Mammary epithelial cell (primary cell): ENCODE measurements at regions of chr21 and their contacts with region 1.

Region 1: DNA sequence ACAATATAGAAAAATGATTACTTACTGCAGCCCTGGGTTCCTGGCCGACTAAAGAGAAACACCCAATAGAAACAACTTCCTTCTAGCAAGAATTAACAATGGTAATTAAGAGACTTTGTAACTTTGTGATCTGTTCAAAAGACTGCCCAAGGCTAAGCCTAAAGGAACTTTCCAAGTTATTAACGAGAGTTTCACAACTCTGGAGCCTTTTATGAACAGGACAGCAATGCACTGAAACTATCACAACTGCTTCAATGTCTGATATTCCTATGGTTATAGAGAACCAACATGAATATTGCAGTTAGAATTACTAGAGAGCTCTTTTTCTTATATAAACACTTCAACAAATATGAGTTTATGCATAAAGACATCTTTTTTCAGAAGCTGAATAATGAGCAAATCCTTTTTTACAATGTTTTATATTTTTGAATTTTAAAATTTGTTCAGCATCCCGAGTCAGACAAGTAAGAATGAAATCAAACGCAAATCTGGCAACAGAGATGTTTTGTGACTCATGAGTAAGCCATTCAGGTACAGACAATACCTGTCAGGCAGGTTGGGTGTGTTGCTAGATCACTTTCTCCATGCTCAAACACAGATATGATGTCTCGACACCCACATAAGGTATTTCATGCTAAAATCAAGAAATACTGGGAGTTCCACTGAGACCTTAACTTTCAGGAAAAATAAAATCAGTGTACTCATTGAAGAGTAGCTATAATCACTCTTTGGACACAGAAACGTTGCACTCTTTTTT is 22.2 kb upstream of the KCNJ15 start:
- DNase-seq: peak; percentile 92
- H3K4me3 ChIP-seq: peak overlapping the region in 1 of 3 experiments; percentile 7
- H3K27ac ChIP-seq: peak overlapping the region; percentile 88
- H3K4me1 ChIP-seq: peaks cover 24% of the 10 kb centered on the region
- H3K27me3 ChIP-seq: no peaks in the 10 kb centered on the region
- CTCF ChIP-seq: no peak

Region 2: GRCh38 chr21:38256599-38257302 is 22.2 kb after region 1 on chr21 and contains the start of gene KCNJ15:
- CTCF ChIA-PET with region 1: no interaction called
- dilution Hi-C with region 1: no loop called
- in situ Hi-C with region 1: no loop called
- intact Hi-C with region 1: loop called (anchors 1 kb)
- DNase-seq: peak; percentile 62
- H3K4me3 ChIP-seq: peak within 1 kb of the TSS; percentile 48 to 95 (median 88)
- H3K27ac ChIP-seq: peak within 1 kb of the TSS; percentile 84
- H3K4me1 ChIP-seq: peaks cover 21% of the 10 kb centered on the region
- H3K27me3 ChIP-seq: no peaks in the 10 kb centered on the region
- CTCF ChIP-seq: no peak
- total RNA-seq, gene KCNJ15: 0.83 to 11.7 TPM

Region 3: DNA sequence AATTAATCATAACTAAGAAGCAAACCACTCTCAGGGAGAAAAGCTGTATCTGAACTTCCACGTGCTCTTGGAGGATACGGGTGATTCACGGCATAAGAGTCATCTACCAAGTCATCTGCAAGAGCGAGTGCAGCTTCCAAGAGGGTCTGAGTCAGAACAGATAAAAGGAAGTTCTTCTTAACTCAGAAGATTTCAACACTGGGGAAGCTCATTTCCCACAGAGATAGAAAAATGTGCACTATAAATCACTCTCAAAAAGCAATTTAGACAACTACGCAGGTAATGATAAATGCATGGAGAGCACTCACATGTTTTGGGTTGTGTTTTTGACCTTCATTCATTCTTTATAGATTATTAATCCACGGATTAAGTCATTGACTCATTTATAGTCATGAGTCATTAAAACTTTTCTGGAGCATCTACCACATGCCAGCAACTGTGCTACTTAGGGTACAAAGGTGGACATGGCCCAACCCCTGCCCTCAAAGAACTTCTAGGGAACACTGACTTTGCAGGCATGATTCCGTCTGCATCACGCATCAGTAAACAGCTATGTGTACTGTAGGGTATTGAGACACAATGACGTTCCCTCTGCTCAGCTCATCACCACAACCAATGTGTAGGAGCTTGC is 43.0 kb after region 1 on chr21:
- CTCF ChIA-PET with region 1: no interaction called
- dilution Hi-C with region 1: no loop called
- in situ Hi-C with region 1: no loop called
- intact Hi-C with region 1: loop called (anchors 2 kb)
- DNase-seq: peak; percentile 99
- H3K4me3 ChIP-seq: no peak overlapping the region
- H3K27ac ChIP-seq: peak overlapping the region; percentile 91
- H3K4me1 ChIP-seq: peaks cover 37% of the 10 kb centered on the region
- H3K27me3 ChIP-seq: no peaks in the 10 kb centered on the region
- CTCF ChIP-seq: no peak